PC-3 (cell line): ENCODE measurements at regions of chr12 and their contacts with region 1.

Region 1: GRCh38 chr12:106223485-106224354 is 24.1 kb downstream of the CKAP4 start:
- DNase-seq: peak; percentile 89
- ATAC-seq: peak; percentile 80
- H3K4me3 ChIP-seq: no peak overlapping the region
- H3K27ac ChIP-seq: no peak overlapping the region
- H3K4me1 ChIP-seq: peaks cover 11% of the 10 kb centered on the region
- H3K27me3 ChIP-seq: no peaks in the 10 kb centered on the region
- CTCF ChIP-seq: peak; percentile 94

Region 2: DNA sequence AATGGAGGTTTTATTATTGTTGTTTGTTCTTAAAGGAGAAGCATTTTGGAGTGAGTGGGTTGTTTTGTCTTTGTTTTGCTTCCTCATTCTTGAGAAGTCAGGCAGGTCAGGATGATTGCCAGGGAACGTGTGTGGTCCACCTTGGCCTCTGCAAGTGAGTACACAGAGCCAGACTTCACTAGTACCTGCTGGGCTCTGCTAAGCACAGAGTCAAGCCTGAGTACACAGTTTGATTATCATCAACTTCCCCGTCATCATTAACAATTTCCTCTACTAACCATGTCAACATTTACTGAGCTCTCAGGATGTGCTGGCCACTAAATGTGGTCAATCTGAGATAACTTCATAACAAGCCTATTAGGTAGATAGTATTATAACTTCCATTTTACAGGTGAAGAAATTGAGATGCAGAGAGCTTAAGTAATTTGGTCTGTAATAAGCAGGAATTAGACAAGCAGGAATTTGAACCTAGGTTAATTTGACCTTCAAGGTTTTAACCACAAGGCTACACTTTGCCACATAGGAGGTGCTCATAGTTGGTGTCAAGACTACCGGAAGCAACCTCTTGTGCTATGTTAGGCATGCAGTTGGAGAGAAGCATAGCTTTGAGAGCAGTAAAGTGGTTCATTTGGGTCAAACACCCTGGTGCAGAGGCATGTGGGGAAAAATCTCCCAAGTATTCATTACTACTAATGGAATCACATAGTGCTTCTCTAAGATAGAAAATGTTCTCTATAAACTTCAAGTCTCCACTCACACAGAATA is 263.2 kb before region 1 on chr12:
- CTCF ChIA-PET with region 1: no interaction called
- POLR2A ChIA-PET with region 1: no interaction called
- intact Hi-C with region 1: no loop called
- DNase-seq: peak; percentile 75
- ATAC-seq: peak; percentile 81
- H3K4me3 ChIP-seq: no peak overlapping the region
- H3K27ac ChIP-seq: no peak overlapping the region
- H3K4me1 ChIP-seq: no peaks in the 10 kb centered on the region
- H3K27me3 ChIP-seq: peaks cover 9% of the 10 kb centered on the region; the same call in 1 of the 2 replicates
- CTCF ChIP-seq: no peak

Region 3: DNA sequence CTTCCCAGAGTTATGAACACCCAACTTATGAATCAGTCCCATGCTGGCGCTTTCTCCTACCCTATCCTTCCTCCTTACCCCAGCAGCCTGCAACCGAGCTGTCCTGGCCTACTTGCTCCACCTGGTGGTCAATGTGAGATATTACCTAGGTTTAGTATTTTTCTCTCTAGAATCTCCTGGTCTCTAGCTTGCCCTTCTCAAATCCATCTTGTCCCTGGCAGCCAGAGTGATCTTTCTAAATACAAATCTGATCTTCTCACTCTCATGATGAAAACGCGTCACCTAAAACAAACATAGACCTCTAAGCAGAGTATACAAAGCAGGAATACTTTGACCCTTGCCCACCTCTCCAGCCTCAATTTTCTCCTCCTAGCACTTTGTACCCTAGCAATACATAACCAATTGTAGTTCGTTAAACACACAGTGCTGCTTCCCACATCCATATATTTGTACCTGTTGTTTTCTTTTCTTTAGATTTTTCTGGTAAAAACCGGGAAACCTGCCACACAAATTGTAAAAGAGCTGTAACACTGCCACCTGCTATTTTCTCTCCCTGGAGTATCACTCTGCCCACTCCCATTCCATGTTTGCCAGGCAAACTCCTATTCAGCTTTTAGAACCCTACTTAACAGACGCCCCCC is 58.9 kb after region 1 on chr12:
- CTCF ChIA-PET with region 1: interaction called, 7 read pairs
- POLR2A ChIA-PET with region 1: interaction called, 5 read pairs
- intact Hi-C with region 1: loop called (anchors 1 kb)
- DNase-seq: peak; percentile 78
- ATAC-seq: peak; percentile 71
- H3K4me3 ChIP-seq: no peak overlapping the region
- H3K27ac ChIP-seq: no peak overlapping the region
- H3K4me1 ChIP-seq: peaks cover 33% of the 10 kb centered on the region
- H3K27me3 ChIP-seq: no peaks in the 10 kb centered on the region
- CTCF ChIP-seq: peak; percentile 94

Region 4: DNA sequence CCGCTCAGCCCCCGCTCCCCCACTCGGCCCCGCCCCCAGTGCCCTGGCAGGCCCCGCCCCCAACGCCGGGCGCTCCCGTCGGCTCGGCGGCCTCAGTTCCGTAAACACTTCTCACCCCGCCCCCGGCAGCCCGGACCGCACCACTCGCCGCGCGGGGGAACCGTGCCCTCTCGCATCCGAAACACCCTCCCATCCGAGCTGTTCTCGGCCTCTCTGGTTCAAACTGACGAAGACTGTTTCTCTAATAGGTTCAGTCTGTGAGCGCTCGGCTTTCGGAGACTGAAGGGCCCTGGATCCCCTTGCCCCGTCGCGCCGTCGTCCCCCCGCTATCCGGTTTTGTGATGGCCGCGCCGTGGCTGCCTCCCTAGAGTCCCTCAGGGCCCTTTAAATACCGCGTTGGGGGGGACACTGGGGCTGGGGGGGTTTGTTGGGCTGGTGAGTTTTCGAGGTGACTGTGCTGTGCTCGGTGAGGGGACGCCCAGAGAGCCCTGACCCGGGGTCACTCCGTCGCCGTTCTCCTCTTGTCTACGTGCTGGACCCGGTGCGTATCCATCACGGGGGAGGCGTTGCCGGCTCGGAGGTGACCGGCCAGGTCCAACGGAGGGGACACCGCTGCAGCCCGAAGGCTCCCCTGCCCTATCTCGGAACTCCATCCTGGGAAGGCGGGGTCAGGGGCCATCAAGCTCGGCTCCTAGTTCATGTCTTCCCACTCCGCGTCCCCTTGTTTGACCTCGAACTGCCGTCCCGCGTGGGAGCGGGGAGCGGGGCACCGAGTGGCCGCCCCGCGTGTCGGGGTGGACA is 78.9 kb after region 1 on chr12 and contains the start of gene TCP11L2:
- CTCF ChIA-PET with region 1: interaction called, 4 read pairs
- POLR2A ChIA-PET with region 1: no interaction called
- intact Hi-C with region 1: loop called (anchors 1 kb)
- DNase-seq: peak; percentile 77
- ATAC-seq: peak; percentile 59
- H3K4me3 ChIP-seq: peak within 1 kb of the TSS; percentile 80
- H3K27ac ChIP-seq: peak within 1 kb of the TSS; percentile 84
- H3K4me1 ChIP-seq: peaks cover 42% of the 10 kb centered on the region
- H3K27me3 ChIP-seq: no peaks in the 10 kb centered on the region
- CTCF ChIP-seq: no peak
- total RNA-seq, gene TCP11L2: 10.1 and 12.1 TPM in 2 replicates

Region 5: GRCh38 chr12:106345739-106346138 is 122.0 kb after region 1 on chr12:
- CTCF ChIA-PET with region 1: interaction called, 6 read pairs
- POLR2A ChIA-PET with region 1: no interaction called
- intact Hi-C with region 1: loop called (anchors 1 kb)
- DNase-seq: peak; percentile 76
- ATAC-seq: peak; percentile 54
- H3K4me3 ChIP-seq: no peak overlapping the region
- H3K27ac ChIP-seq: no peak overlapping the region
- H3K4me1 ChIP-seq: peaks cover 15% of the 10 kb centered on the region
- H3K27me3 ChIP-seq: no peaks in the 10 kb centered on the region
- CTCF ChIP-seq: peak; percentile 75

Region 6: DNA sequence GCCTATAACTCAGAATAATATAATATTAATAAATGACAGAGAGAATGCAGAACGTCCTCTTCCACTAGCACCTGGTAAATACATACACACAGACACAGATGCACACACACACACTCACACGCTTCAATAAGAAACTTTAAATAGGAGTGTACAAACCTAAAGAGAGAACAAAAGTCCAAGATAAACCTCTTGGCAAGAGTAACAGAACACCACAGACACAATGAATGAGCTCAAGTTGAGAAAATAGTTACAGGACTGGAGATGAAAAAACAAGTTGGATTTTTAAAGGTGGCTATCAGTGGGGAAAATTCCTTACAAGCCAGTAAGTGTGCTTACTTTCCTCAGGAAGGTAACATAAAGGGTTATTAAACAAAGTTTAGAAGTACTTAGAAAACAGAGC is 834.5 kb after region 1 on chr12:
- CTCF ChIA-PET with region 1: no interaction called
- POLR2A ChIA-PET with region 1: no interaction called
- intact Hi-C with region 1: no loop called
- DNase-seq: no peak
- ATAC-seq: no peak
- H3K4me3 ChIP-seq: no peak overlapping the region
- H3K27ac ChIP-seq: no peak overlapping the region
- H3K4me1 ChIP-seq: peaks cover 7% of the 10 kb centered on the region
- H3K27me3 ChIP-seq: no peaks in the 10 kb centered on the region
- CTCF ChIP-seq: no peak